CD4-positive, alpha-beta memory T cell (primary cell): ENCODE measurements at regions of chr12 and their contacts with region 1.

Region 1: GRCh38 chr12:27940756-27941402 is 31.7 kb downstream of the PTHLH start:
- DNase-seq: peak; percentile 54 to 64 (median 55)
- H3K4me3 ChIP-seq: no peak overlapping the region
- H3K4me3 Mint-ChIP-seq: no peak overlapping the region
- H3K27ac ChIP-seq: no peak overlapping the region
- H3K27ac Mint-ChIP-seq: no peak overlapping the region
- H3K4me1 ChIP-seq: no peaks in the 10 kb centered on the region
- H3K4me1 Mint-ChIP-seq: peaks cover 0 to 2% (median 0%) of the 10 kb centered on the region in 4 donors
- H3K27me3 ChIP-seq: no peaks in the 10 kb centered on the region
- H3K27me3 Mint-ChIP-seq: peaks cover 3 to 4% of the 10 kb centered on the region in 2 donors

Region 2: DNA sequence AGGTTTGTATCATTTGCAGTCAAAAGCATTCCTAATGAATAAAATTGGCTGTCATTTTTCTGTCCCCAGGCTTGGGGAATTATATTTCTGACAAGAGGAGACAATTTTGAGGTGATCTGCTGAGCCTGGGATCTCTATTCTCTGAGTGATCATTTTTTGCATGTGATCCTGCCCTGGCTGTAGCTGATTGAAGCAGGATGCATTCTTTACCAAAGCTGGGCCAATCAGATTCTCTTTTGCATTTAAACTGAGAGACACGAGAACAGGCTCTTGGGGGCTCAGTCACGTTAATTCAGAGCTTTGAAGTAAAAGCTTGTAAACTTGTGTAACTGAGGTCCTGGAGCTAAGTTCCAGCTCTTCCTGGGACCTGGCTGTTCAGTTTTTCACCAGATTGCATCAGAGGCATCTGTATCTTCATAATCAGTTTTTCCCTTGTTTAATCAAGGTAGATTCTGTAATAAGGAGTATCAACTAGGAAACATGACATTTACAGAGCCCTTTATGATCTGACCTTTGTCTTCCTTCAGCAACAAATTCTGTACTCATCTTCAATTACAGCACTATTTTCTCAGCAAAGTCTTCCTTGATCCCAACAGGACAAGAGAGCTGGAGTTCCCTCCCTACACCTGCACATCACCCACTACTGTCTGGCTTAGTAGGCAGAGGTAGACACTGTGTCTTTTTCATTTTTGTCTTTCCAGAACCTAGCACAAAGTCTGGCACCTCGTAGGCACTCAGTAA is 125.9 kb before region 1 on chr12:
- CTCF ChIA-PET with region 1: no interaction called
- POLR2A ChIA-PET with region 1: no interaction called
- intact Hi-C with region 1: no loop called
- DNase-seq: no peak
- H3K4me3 ChIP-seq: no peak overlapping the region
- H3K4me3 Mint-ChIP-seq: no peak overlapping the region
- H3K27ac ChIP-seq: no peak overlapping the region
- H3K27ac Mint-ChIP-seq: no peak overlapping the region
- H3K4me1 ChIP-seq: peaks cover 6% of the 10 kb centered on the region
- H3K4me1 Mint-ChIP-seq: peaks cover 2 to 8% (median 8%) of the 10 kb centered on the region in 4 donors
- H3K27me3 ChIP-seq: no peaks in the 10 kb centered on the region
- H3K27me3 Mint-ChIP-seq: peaks cover 3 to 4% of the 10 kb centered on the region in 2 donors

Region 3: DNA sequence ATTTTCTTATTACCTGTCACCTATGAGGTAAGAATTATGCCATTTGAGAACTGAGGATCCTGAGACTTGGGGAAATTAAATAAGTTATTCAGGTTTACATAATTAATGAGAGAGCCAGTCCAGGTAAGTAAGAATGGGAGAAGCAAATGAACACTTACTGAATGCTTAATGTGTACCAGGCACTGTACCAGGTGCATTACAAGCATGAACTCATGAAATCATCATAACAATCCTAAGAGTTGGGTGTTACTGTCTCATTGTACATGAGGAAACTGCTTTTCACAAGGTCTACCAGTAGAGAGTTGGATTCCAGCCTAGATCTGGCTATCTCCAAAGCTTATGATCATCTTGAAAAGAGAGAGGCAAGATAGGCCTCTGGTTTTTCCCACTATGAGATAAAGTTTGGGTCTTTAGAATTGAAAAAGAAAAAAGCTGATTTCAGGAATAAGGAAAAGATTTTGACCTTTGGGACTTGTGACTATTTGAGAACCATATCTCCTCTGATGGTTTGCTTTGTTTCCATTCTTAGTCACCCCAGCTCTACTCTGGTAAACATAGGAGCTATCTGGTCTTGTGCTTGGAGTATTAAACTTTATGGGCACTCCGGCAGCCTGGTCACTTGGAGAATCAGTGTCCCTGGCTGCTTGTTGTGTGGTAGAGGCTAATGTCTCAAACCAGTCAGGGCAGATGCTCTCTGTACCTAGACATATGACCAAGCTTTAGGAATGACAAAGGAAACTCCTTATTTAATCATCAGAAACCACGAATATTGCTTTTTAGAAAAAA is 16.3 kb before region 1 on chr12:
- CTCF ChIA-PET with region 1: interaction called, 17 read pairs
- POLR2A ChIA-PET with region 1: no interaction called
- intact Hi-C with region 1: no loop called
- DNase-seq: no peak
- H3K4me3 ChIP-seq: no peak overlapping the region
- H3K4me3 Mint-ChIP-seq: no peak overlapping the region
- H3K27ac ChIP-seq: no peak overlapping the region
- H3K27ac Mint-ChIP-seq: no peak overlapping the region
- H3K4me1 ChIP-seq: no peaks in the 10 kb centered on the region
- H3K4me1 Mint-ChIP-seq: no peaks in the 10 kb centered on the region
- H3K27me3 ChIP-seq: no peaks in the 10 kb centered on the region
- H3K27me3 Mint-ChIP-seq: peaks cover 7 to 13% of the 10 kb centered on the region in 2 donors

Region 4: DNA sequence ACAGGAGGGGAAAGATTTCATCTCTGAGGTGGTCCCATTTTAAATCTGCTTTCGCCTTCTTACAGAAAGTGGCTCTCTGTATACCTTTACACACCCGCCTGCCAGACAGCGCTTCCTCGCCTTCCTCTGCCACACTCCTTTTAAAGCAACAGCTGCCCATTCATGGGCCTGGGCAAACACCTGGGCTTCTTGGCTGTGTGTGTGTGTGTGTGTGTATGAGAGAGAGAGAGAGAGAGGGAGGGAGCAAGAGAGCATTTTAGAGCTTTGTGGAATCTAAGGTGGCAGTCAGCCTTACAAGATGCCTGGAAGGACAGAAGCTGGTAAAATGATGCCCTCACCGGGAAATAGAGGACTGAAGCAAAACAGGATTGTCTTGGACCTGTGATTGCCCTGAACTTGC is 11.6 kb after region 1 on chr12:
- CTCF ChIA-PET with region 1: interaction called, 13 read pairs
- POLR2A ChIA-PET with region 1: no interaction called
- intact Hi-C with region 1: no loop called
- DNase-seq: no peak
- H3K4me3 ChIP-seq: no peak overlapping the region
- H3K4me3 Mint-ChIP-seq: no peak overlapping the region
- H3K27ac ChIP-seq: no peak overlapping the region
- H3K27ac Mint-ChIP-seq: no peak overlapping the region
- H3K4me1 ChIP-seq: no peaks in the 10 kb centered on the region
- H3K4me1 Mint-ChIP-seq: no peaks in the 10 kb centered on the region
- H3K27me3 ChIP-seq: no peaks in the 10 kb centered on the region
- H3K27me3 Mint-ChIP-seq: peaks cover 3 to 7% of the 10 kb centered on the region in 2 donors

Region 5: GRCh38 chr12:28014196-28014595 is 73.3 kb after region 1 on chr12:
- CTCF ChIA-PET with region 1: no interaction called
- POLR2A ChIA-PET with region 1: no interaction called
- intact Hi-C with region 1: no loop called
- DNase-seq: no peak
- H3K4me3 ChIP-seq: no peak overlapping the region
- H3K4me3 Mint-ChIP-seq: no peak overlapping the region
- H3K27ac ChIP-seq: no peak overlapping the region
- H3K27ac Mint-ChIP-seq: no peak overlapping the region
- H3K4me1 ChIP-seq: no peaks in the 10 kb centered on the region
- H3K4me1 Mint-ChIP-seq: no peaks in the 10 kb centered on the region
- H3K27me3 ChIP-seq: no peaks in the 10 kb centered on the region
- H3K27me3 Mint-ChIP-seq: peaks cover 0 to 4% of the 10 kb centered on the region in 2 donors